Panc1 (cell line): ENCODE measurements at regions of chr19 and their contacts with region 1.

Region 1: GRCh38 chr19:17865364-17866311 is 5.9 kb downstream of the RPL18A start:
- DNase-seq: no peak
- ATAC-seq: peak; percentile 77
- H3K4me3 ChIP-seq: no peak overlapping the region
- H3K27ac ChIP-seq: 0 out of 2 replicates have a peak overlapping the region, but pooled peaks have one; percentile 7
- H3K4me1 ChIP-seq: peaks cover 29% of the 10 kb centered on the region
- H3K27me3 ChIP-seq: no peaks in the 10 kb centered on the region
- CTCF ChIP-seq: no peak

Region 2: DNA sequence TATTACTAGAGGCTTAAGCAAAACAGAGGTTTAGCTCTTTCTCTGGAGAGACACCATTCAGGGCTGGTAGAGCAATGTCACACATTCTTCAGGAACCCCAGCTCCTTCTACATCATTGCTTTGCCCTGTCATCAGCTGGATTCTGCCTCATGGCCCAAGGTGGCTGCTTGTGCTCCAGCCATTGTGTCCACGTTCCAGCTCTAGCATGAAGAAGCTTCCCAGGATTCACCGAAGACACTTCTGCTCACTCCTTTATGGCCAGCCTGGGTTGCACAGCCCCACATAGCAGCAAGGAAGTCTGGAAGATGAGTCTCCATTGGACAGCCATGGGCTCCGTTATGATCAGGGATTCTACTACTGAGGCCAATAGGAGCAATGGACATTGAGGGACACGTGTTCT is 341.0 kb before region 1 on chr19:
- CTCF ChIA-PET with region 1: no interaction called
- POLR2A ChIA-PET with region 1: interaction called, 13 read pairs
- in situ Hi-C with region 1: no loop called
- intact Hi-C with region 1: no loop called
- DNase-seq: no peak
- ATAC-seq: no peak
- H3K4me3 ChIP-seq: no peak overlapping the region
- H3K27ac ChIP-seq: no peak overlapping the region
- H3K4me1 ChIP-seq: no peaks in the 10 kb centered on the region
- H3K27me3 ChIP-seq: no peaks in the 10 kb centered on the region
- CTCF ChIP-seq: no peak

Region 3: DNA sequence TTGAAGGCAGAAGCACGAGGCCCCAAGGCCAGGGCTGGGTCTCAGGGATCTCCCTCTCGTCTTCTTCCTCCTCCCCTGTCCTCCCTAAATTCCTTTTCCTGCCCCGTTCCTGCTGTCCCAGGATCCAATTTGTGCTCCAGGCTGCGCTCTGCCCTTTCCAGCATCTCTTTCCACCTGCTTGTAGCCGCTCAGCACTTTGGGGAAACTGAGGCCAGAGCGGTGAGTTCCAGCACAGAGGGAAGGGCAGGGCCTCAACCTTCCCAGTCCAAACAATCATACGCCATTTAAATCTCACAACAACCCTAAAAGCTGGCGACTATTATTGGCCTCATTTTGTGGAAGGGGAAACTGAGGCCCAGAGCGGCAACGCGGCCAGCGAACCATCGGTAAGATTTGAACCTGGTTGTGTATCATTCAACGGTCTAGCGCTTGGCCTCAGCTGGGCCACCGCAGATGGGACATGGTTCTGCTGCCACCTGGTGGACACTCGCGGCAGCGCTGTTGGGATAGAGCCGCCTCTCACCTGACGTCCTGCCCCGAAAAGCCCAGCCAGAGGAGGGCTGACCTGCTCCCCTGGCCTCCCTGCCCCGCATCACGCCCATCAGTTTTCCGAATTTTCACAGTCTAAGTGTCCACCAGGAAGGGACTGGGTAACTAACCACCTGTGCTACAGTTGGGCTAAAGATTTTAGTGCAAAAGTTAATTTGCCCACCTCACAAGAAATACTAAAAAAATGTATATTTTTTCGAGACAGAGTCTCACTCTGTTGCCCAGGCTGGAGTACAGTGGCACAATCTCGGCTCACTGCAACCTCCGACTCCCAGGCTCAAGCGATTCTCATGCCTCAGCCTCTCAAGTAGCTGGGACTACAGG is 10.1 kb before region 1 on chr19:
- CTCF ChIA-PET with region 1: no interaction called
- POLR2A ChIA-PET with region 1: no interaction called
- in situ Hi-C with region 1: no loop called
- intact Hi-C with region 1: no loop called
- DNase-seq: no peak
- ATAC-seq: peak; percentile 72
- H3K4me3 ChIP-seq: no peak overlapping the region
- H3K27ac ChIP-seq: no peak overlapping the region
- H3K4me1 ChIP-seq: peaks cover 1% of the 10 kb centered on the region; the same call in 1 of the 2 replicates
- H3K27me3 ChIP-seq: no peaks in the 10 kb centered on the region
- CTCF ChIP-seq: peak; percentile 92

Region 4: DNA sequence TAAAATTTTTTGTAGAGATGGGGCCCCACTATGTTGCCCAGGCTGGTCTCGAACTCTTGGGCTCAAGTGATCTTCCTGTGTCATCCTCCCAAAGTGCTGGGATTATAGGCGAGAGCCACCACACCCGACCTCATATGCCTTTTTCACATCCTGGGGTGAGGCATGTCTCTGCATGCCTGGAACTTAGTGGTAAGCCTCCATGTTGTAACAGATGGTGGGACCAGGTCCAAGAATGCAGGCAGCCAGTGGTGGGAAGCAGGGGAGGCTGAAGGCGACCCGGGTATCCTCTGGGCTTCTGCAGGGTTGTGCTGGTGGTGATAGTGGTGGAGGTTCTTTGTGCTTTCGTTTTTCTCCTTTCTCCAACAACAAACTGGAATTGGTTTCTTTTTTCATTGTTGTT is 37.1 kb after region 1 on chr19:
- CTCF ChIA-PET with region 1: no interaction called
- POLR2A ChIA-PET with region 1: interaction called, 13 read pairs
- in situ Hi-C with region 1: no loop called
- intact Hi-C with region 1: no loop called
- DNase-seq: no peak
- ATAC-seq: no peak
- H3K4me3 ChIP-seq: no peak overlapping the region
- H3K27ac ChIP-seq: no peak overlapping the region
- H3K4me1 ChIP-seq: no peaks in the 10 kb centered on the region
- H3K27me3 ChIP-seq: no peaks in the 10 kb centered on the region
- CTCF ChIP-seq: no peak